ENCODE measurements at regions of chr11 and their contacts with region 1.

Region 1: GRCh38 chr11:10933455-10934292 is 75.8 kb upstream of the ZBED5 start:
- DNase-seq: peak; percentile 92 to 95
- H3K4me3 ChIP-seq: peak overlapping the region; percentile 27
- H3K4me3 Mint-ChIP-seq: peak overlapping the region; percentile 85
- H3K27ac Mint-ChIP-seq: peak overlapping the region; percentile 64
- H3K4me1 ChIP-seq: peaks cover 16% of the 10 kb centered on the region
- H3K4me1 Mint-ChIP-seq: peaks cover 22% of the 10 kb centered on the region
- H3K27me3 ChIP-seq: no peaks in the 10 kb centered on the region
- H3K27me3 Mint-ChIP-seq: no peaks in the 10 kb centered on the region
- CTCF ChIP-seq: peak; percentile 93 to 97

Region 2: DNA sequence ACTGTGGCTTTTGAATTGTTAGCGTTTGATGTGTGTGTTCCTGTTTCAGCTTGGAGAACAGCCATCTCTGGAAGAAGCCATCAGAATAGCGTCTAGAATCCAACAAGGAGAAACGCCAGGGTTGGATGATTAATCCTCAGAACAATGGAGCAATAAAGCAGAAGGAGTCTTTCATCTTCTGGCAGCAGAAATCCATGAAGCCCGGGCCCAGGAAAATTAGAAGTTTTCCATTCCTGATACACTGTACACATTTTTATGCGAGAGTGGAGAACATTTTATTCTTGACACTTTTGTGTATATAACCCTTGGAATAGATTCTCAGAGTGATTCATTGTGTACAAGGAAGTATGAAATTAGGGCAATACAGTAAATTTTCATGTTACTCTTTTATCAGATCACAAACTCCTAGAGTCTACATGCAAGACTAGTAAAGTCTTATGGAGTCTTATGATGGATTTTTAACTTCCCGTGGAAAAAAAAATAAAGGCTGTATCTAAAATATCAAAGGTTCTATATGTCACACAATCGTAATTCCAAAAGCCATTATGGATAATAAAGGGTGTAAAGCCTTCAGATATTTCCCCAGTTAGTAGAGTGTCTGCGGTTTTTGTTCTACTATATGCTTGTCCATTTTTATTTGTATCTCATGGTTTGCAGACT is 1406.1 kb before region 1 on chr11:
- CTCF ChIA-PET with region 1: no interaction called
- POLR2A ChIA-PET with region 1: no interaction called
- intact Hi-C with region 1: no loop called
- DNase-seq: no peak
- H3K4me3 ChIP-seq: no peak overlapping the region
- H3K4me3 Mint-ChIP-seq: no peak overlapping the region
- H3K27ac Mint-ChIP-seq: peak overlapping the region; percentile 35
- H3K4me1 ChIP-seq: peaks cover 41% of the 10 kb centered on the region
- H3K4me1 Mint-ChIP-seq: peaks cover 27% of the 10 kb centered on the region
- H3K27me3 ChIP-seq: no peaks in the 10 kb centered on the region
- H3K27me3 Mint-ChIP-seq: no peaks in the 10 kb centered on the region
- CTCF ChIP-seq: no peak

Region 3: DNA sequence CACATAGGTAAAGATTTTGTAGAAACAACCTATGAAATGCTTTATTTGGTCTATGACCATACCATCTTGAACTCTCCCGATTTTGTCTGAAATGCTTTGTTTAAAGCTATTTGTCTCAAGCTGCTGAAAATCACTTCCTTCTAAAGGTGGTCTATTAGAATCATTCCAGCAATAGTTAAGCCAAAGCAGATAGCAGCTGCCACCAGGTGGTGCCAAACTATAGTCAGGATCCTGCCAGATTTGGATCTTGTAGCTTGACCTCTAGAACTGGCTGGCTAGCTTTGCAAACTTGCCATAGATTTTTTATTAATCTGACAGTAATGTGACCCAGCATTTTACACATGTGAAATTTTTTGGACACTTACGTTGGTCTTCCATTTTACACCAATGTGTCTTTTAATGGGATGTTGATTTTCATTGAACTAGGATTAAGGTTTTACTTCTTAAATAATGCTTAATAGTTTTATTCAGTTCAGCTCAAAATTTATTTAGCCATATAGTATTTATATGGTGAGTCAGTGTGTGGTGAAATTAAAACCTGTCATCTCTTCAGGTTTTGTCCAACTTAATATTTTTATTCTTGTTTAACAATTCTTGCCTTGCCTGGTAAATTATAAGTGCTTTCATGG is 162.9 kb before region 1 on chr11:
- CTCF ChIA-PET with region 1: interaction called, 11 read pairs
- POLR2A ChIA-PET with region 1: no interaction called
- intact Hi-C with region 1: no loop called
- DNase-seq: peak; percentile 59 to 60
- H3K4me3 ChIP-seq: no peak overlapping the region
- H3K4me3 Mint-ChIP-seq: no peak overlapping the region
- H3K27ac Mint-ChIP-seq: no peak overlapping the region
- H3K4me1 ChIP-seq: no peaks in the 10 kb centered on the region
- H3K4me1 Mint-ChIP-seq: no peaks in the 10 kb centered on the region
- H3K27me3 ChIP-seq: no peaks in the 10 kb centered on the region
- H3K27me3 Mint-ChIP-seq: no peaks in the 10 kb centered on the region
- CTCF ChIP-seq: peak; percentile 79 to 86

Region 4: GRCh38 chr11:10857709-10858438 is 75.8 kb before region 1 on chr11 and contains the start of gene ZBED5:
- CTCF ChIA-PET with region 1: interaction called, 9 read pairs
- POLR2A ChIA-PET with region 1: interaction called, 9 read pairs
- intact Hi-C with region 1: loop called (anchors 1 kb)
- DNase-seq: peak; percentile 96 to 97
- H3K4me3 ChIP-seq: peak within 1 kb of the TSS; percentile 90
- H3K4me3 Mint-ChIP-seq: peak within 1 kb of the TSS; percentile 97
- H3K27ac Mint-ChIP-seq: peak within 1 kb of the TSS; percentile 96
- H3K4me1 ChIP-seq: peaks cover 7% of the 10 kb centered on the region; the same call in 1 of the 2 replicates
- H3K4me1 Mint-ChIP-seq: peaks cover 13% of the 10 kb centered on the region
- H3K27me3 ChIP-seq: no peaks in the 10 kb centered on the region
- H3K27me3 Mint-ChIP-seq: no peaks in the 10 kb centered on the region
- CTCF ChIP-seq: peak; percentile 23 to 29
- total RNA-seq, gene ZBED5: 42.1 and 53.2 TPM in 2 replicates

Region 5: DNA sequence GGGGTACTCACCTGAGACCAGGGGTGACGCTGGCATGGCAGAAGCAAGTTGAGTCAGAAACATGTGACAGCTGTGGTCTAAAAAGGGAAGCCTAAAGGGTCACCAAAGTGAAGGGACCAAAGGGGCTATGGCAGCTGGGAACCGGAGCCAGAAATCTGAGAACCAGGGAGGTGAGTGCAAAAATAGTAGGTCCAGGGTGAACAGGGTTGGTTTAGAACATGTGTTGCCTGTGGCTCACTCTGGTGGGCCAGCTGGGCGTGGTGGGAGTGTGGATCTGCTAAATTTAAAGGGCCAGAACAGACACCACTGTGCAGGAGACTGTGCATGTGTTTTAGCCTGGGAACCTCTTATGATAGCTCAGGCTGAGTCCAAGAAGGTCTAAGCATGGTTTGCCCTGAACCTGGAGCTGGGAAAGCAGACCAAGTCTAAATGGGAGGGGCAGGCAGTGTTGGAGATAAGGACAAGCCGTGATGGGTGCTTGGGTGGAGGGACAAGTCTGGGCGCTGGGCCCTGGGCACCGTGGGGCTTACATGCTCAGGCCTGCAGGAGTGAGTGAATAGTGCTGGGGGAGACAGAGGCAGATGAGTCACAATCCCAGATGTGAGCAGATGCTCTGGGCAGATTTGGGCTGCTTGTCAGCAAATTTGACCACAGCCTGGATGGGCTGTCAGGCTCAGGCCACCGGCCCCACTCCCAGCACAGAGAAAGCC is 34.4 kb before region 1 on chr11:
- CTCF ChIA-PET with region 1: interaction called, 13 read pairs
- POLR2A ChIA-PET with region 1: interaction called, 7 read pairs
- intact Hi-C with region 1: loop called (anchors 1 kb)
- DNase-seq: peak in 1 of 2 experiments; percentile 74
- H3K4me3 ChIP-seq: no peak overlapping the region
- H3K4me3 Mint-ChIP-seq: peak overlapping the region; percentile 55
- H3K27ac Mint-ChIP-seq: peak overlapping the region; percentile 86
- H3K4me1 ChIP-seq: peaks cover 39% of the 10 kb centered on the region
- H3K4me1 Mint-ChIP-seq: peaks cover 58% of the 10 kb centered on the region
- H3K27me3 ChIP-seq: no peaks in the 10 kb centered on the region
- H3K27me3 Mint-ChIP-seq: no peaks in the 10 kb centered on the region
- CTCF ChIP-seq: no peak

Region 6: DNA sequence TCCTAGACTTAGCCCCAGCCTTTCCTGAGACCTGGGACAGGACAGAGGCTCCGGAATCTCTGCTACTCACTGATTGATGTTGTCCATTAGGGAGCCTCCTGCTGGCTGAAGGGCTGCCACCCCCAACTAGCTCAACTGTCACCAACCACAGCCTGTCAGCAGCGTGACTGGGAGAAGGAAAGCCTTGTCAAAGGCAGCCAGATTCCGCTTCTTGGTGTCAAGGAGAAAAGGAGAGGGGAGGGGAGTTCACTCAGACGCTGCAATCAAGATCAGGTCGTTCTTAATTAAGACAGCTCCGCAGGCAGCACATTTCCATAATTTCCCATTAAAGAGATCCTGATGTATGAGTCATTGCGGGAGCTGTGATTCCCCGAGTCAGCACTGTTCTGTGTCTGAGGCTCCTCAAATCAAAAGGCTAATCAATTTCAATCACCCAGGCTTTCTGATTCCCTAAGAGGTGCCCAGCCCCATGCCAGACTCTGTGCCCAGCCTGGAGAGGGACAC is 77.0 kb after region 1 on chr11:
- CTCF ChIA-PET with region 1: interaction called, 38 read pairs
- POLR2A ChIA-PET with region 1: interaction called, 6 read pairs
- intact Hi-C with region 1: no loop called
- DNase-seq: peak; percentile 49 to 56
- H3K4me3 ChIP-seq: no peak overlapping the region
- H3K4me3 Mint-ChIP-seq: no peak overlapping the region
- H3K27ac Mint-ChIP-seq: peak overlapping the region; percentile 17
- H3K4me1 ChIP-seq: peaks cover 22% of the 10 kb centered on the region
- H3K4me1 Mint-ChIP-seq: peaks cover 22% of the 10 kb centered on the region
- H3K27me3 ChIP-seq: no peaks in the 10 kb centered on the region
- H3K27me3 Mint-ChIP-seq: no peaks in the 10 kb centered on the region
- CTCF ChIP-seq: peak in 1 of 2 experiments; percentile 49

Region 7: DNA sequence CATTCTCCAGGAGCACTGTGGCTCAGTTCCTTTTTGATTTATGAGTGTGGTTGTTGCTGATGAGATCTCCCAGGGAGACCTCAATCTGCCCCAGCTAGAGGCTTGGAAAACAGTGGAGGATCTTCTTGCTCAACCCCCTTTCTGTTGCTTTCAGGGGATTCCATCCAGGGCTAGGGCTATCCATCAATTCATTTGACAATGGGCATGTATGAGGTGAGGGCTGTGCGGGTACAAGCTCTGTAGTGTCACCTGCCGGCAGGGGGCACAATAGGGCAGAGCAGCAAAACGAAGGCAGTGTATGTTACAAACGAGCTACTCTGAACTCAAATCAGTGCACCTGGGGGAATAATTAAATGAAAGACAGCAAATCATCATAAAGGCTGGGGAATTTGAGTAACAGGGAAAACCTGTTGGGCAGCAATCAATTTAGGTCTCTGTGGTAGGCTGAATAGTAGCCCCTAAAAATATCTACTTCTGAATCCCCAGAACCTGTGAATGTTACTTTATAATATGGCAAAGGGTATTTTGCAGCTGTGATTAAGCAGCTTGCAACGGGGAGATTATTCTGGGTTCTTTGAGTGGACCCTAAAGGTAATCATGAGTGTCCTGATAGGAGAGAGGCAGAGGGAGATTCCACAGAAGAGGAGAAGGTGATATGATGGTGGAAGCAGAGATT is 94.5 kb after region 1 on chr11:
- CTCF ChIA-PET with region 1: interaction called, 133 read pairs
- POLR2A ChIA-PET with region 1: no interaction called
- intact Hi-C with region 1: no loop called
- DNase-seq: peak; percentile 74 to 79
- H3K4me3 ChIP-seq: no peak overlapping the region
- H3K4me3 Mint-ChIP-seq: no peak overlapping the region
- H3K27ac Mint-ChIP-seq: no peak overlapping the region
- H3K4me1 ChIP-seq: no peaks in the 10 kb centered on the region
- H3K4me1 Mint-ChIP-seq: no peaks in the 10 kb centered on the region
- H3K27me3 ChIP-seq: no peaks in the 10 kb centered on the region; the same call in 1 of the 2 replicates
- H3K27me3 Mint-ChIP-seq: peaks cover 7% of the 10 kb centered on the region
- CTCF ChIP-seq: peak; percentile 83 to 90

Region 8: GRCh38 chr11:11265994-11266606 is 332.4 kb after region 1 on chr11:
- CTCF ChIA-PET with region 1: no interaction called
- POLR2A ChIA-PET with region 1: no interaction called
- intact Hi-C with region 1: loop called (anchors 5 kb)
- DNase-seq: peak; percentile 58 to 78
- H3K4me3 ChIP-seq: no peak overlapping the region
- H3K4me3 Mint-ChIP-seq: no peak overlapping the region
- H3K27ac Mint-ChIP-seq: no peak overlapping the region
- H3K4me1 ChIP-seq: no peaks in the 10 kb centered on the region
- H3K4me1 Mint-ChIP-seq: no peaks in the 10 kb centered on the region
- H3K27me3 ChIP-seq: no peaks in the 10 kb centered on the region; the same call in 1 of the 2 replicates
- H3K27me3 Mint-ChIP-seq: peaks cover 5% of the 10 kb centered on the region
- CTCF ChIP-seq: peak; percentile 83 to 86